Activated CD4-positive, alpha-beta T cell treated with anti-CD3 and anti-CD28 coated beads, Interleukin-2, amount 10 ng/mL, durations not matched to agents 24 days and 14 days (primary cell): ENCODE measurements at regions of chr4 and their contacts with region 1.

Region 1: GRCh38 chr4:154626793-154627484 is 14.5 kb upstream of the FGG start:
- DNase-seq: peak; percentile 80
- H3K4me3 Mint-ChIP-seq: no peak overlapping the region
- H3K27ac Mint-ChIP-seq: no peak overlapping the region
- H3K4me1 Mint-ChIP-seq: no peaks in the 10 kb centered on the region
- H3K27me3 Mint-ChIP-seq: peaks cover 28% of the 10 kb centered on the region

Region 2: DNA sequence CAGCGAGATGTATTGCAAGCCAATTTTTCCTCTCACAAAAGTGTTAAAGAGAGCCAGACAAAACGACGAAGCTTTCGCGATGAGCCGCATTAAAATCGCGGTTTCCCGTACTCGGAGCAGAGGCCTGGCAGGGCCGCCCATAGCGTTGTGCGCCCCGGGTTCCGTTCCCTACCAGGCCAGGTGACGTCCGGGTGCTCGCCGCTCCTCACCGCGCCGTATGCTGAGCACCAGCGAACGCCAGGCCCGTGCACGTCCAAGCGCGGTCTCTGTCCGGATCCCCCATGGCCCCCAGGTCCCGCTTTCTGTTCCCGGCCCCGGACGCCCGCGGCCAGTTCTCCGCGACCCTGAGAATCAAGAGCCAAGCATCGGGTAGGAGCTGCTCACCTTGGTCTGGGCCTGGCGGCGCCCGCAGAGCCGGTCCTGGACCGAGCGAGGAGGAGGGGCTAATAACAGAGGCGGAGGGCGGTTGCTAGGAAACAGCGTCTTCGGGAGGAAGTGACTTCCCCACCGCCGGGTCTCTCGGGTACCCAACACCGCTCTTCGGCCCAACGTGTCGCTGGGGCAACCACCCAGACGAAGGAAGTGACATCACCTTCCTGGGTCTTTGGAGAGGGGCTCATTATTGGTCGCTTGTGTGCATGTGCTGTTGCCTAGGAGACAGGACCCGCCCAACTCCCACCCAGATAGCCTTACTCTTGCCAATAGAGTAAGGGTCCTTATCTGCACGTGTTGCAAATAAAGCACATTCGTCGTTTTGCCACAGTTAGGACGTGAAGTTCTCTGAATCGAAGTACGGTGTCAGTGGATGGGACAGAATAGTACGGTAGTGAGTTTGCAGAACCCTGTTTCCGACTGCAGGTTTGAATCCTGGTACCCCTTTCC is 749.7 kb after region 1 on chr4 and contains the start of gene MAP9:
- intact Hi-C with region 1: loop called (anchors 10 kb)
- DNase-seq: peak; percentile 95
- H3K4me3 Mint-ChIP-seq: peak within 1 kb of the TSS; percentile 84
- H3K27ac Mint-ChIP-seq: peak within 1 kb of the TSS; percentile 76
- H3K4me1 Mint-ChIP-seq: peaks cover 12% of the 10 kb centered on the region
- H3K27me3 Mint-ChIP-seq: peaks cover 6% of the 10 kb centered on the region
- total RNA-seq, gene MAP9: 6.1 and 6.9 TPM in 2 replicates